Caco-2 (cell line): ENCODE measurements at regions of chr2 and their contacts with region 1.

Region 1: GRCh38 chr2:139031722-139032121 is 251.5 kb upstream of the NXPH2 start:
- DNase-seq: peak; percentile 38 to 43
- H3K4me3 ChIP-seq: no peak overlapping the region
- H3K4me3 Mint-ChIP-seq: no peak overlapping the region
- H3K27ac Mint-ChIP-seq: no peak overlapping the region
- H3K4me1 ChIP-seq: no peaks in the 10 kb centered on the region
- H3K4me1 Mint-ChIP-seq: no peaks in the 10 kb centered on the region
- H3K27me3 ChIP-seq: no peaks in the 10 kb centered on the region
- H3K27me3 Mint-ChIP-seq: no peaks in the 10 kb centered on the region
- CTCF ChIP-seq: peak in 1 of 2 experiments; percentile 69

Region 2: DNA sequence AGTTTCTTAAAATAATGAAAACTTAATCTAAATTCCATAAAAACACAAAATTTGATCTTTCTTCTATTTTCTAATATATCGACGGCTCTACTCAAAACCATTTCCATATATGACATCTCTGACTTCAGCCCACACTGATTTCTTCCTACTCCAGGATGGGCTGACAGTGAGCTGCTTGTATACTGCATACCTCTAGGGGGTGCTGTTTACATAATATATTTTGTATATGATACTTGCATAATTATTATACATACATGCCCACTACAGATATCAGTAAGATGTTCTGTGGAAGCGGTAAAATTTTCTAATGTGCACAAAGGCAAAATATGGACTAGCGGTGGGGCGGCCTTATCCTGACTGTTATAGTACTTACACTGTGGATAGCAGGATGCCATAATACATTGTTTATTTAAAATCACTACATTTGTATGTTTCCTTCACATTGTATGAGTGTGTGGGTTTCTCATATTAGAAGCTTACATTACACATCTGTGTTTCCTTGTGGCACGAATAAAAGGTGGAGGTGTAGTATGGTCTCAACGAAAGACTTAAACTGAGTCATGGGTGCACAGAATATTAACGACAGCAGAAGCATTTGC is 185.4 kb before region 1 on chr2:
- CTCF ChIA-PET with region 1: interaction called, 6 read pairs
- POLR2A ChIA-PET with region 1: no interaction called
- intact Hi-C with region 1: loop called (anchors 1 kb)
- DNase-seq: peak in 1 of 2 experiments; percentile 39
- H3K4me3 ChIP-seq: no peak overlapping the region
- H3K4me3 Mint-ChIP-seq: no peak overlapping the region
- H3K27ac Mint-ChIP-seq: no peak overlapping the region
- H3K4me1 ChIP-seq: no peaks in the 10 kb centered on the region
- H3K4me1 Mint-ChIP-seq: no peaks in the 10 kb centered on the region
- H3K27me3 ChIP-seq: no peaks in the 10 kb centered on the region
- H3K27me3 Mint-ChIP-seq: no peaks in the 10 kb centered on the region
- CTCF ChIP-seq: peak; percentile 62 to 71

Region 3: DNA sequence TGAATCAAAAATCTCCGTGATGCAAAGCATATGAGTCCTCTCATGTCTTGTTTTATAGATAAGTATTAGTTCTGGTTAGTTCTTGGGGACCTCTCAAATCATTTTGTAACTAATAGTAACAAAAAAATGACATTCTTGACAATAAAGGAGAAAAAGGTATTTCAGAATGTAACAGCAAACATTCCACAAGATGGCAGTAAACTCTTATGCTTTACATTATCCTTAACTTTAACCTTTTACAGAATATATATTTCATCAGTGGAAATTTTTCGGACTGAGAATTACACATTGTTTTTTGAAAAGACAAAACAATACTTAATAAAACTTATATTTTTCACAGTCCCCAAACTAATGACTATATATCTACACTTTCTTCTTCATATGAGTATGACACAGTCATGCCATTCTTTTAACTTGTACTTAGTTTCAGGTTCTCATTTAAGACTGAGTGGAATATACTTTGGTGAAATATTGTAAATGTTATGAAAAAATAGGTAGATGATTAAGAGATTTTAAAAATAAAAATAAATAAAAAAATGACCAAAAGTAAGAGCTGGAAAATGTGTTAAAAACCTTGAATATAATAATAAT is 108.7 kb before region 1 on chr2:
- CTCF ChIA-PET with region 1: interaction called, 5 read pairs
- POLR2A ChIA-PET with region 1: no interaction called
- intact Hi-C with region 1: loop called (anchors 1 kb)
- DNase-seq: no peak
- H3K4me3 ChIP-seq: no peak overlapping the region
- H3K4me3 Mint-ChIP-seq: no peak overlapping the region
- H3K27ac Mint-ChIP-seq: no peak overlapping the region
- H3K4me1 ChIP-seq: no peaks in the 10 kb centered on the region
- H3K4me1 Mint-ChIP-seq: no peaks in the 10 kb centered on the region
- H3K27me3 ChIP-seq: no peaks in the 10 kb centered on the region
- H3K27me3 Mint-ChIP-seq: no peaks in the 10 kb centered on the region
- CTCF ChIP-seq: peak in 1 of 2 experiments; percentile 57

Region 4: DNA sequence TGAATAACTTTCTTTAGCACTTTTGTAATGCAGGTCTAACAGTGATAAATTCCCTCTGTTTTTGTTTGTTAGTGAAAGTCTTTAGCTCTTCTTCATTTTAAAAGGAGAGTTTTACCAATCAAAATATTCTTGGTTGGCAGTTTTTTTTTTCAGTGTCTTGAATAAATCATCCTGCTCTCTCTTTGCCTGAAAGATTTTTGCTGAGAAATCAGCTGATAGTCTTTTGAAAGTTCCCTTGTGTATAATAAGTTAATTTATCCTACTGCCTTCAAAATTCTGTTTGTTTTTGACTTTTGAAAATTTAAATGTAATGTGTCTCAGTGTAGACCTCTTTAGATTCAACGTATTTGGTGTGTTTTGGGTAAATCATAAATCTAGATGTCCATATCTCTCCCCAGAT is 45.8 kb before region 1 on chr2:
- CTCF ChIA-PET with region 1: no interaction called
- POLR2A ChIA-PET with region 1: no interaction called
- intact Hi-C with region 1: no loop called
- DNase-seq: no peak
- H3K4me3 ChIP-seq: no peak overlapping the region
- H3K4me3 Mint-ChIP-seq: no peak overlapping the region
- H3K27ac Mint-ChIP-seq: no peak overlapping the region
- H3K4me1 ChIP-seq: no peaks in the 10 kb centered on the region
- H3K4me1 Mint-ChIP-seq: no peaks in the 10 kb centered on the region
- H3K27me3 ChIP-seq: no peaks in the 10 kb centered on the region
- H3K27me3 Mint-ChIP-seq: peaks cover 3% of the 10 kb centered on the region
- CTCF ChIP-seq: no peak

Region 5: GRCh38 chr2:139080244-139080643 is 48.5 kb after region 1 on chr2:
- CTCF ChIA-PET with region 1: no interaction called
- POLR2A ChIA-PET with region 1: no interaction called
- intact Hi-C with region 1: no loop called
- DNase-seq: no peak
- H3K4me3 ChIP-seq: no peak overlapping the region
- H3K4me3 Mint-ChIP-seq: no peak overlapping the region
- H3K27ac Mint-ChIP-seq: no peak overlapping the region
- H3K4me1 ChIP-seq: no peaks in the 10 kb centered on the region
- H3K4me1 Mint-ChIP-seq: no peaks in the 10 kb centered on the region
- H3K27me3 ChIP-seq: no peaks in the 10 kb centered on the region
- H3K27me3 Mint-ChIP-seq: no peaks in the 10 kb centered on the region
- CTCF ChIP-seq: no peak